ENCODE measurements at regions of chr6 and their contacts with region 1.

Region 1: GRCh38 chr6:121726596-121726995 is 291.1 kb downstream of the GJA1 start:
- DNase-seq: no peak
- H3K4me3 ChIP-seq: no peak overlapping the region
- H3K4me3 Mint-ChIP-seq: no peak overlapping the region
- H3K27ac Mint-ChIP-seq: no peak overlapping the region
- H3K4me1 ChIP-seq: no peaks in the 10 kb centered on the region
- H3K4me1 Mint-ChIP-seq: no peaks in the 10 kb centered on the region
- H3K27me3 ChIP-seq: no peaks in the 10 kb centered on the region
- H3K27me3 Mint-ChIP-seq: no peaks in the 10 kb centered on the region
- CTCF ChIP-seq: no peak

Region 2: GRCh38 chr6:121699571-121699970 is 27.0 kb before region 1 on chr6:
- CTCF ChIA-PET with region 1: no interaction called
- POLR2A ChIA-PET with region 1: no interaction called
- intact Hi-C with region 1: loop called (anchors 1 kb)
- DNase-seq: no peak
- H3K4me3 ChIP-seq: no peak overlapping the region
- H3K4me3 Mint-ChIP-seq: no peak overlapping the region
- H3K27ac Mint-ChIP-seq: no peak overlapping the region
- H3K4me1 ChIP-seq: no peaks in the 10 kb centered on the region
- H3K4me1 Mint-ChIP-seq: no peaks in the 10 kb centered on the region
- H3K27me3 ChIP-seq: no peaks in the 10 kb centered on the region
- H3K27me3 Mint-ChIP-seq: no peaks in the 10 kb centered on the region
- CTCF ChIP-seq: no peak